CD14-positive monocyte (primary cell): ENCODE measurements at regions of chr22 and their contacts with region 1.

Region 1: GRCh38 chr22:21045585-21046294 is at the start of gene LRRC74B:
- DNase-seq: peak; percentile 79 to 86 (median 79)
- H3K4me3 ChIP-seq: peak within 1 kb of the TSS in 2 of 3 experiments; percentile 13 to 68
- H3K4me3 Mint-ChIP-seq: peak within 1 kb of the TSS; percentile 70 to 97
- H3K27ac ChIP-seq: no peak within 1 kb of the TSS
- H3K27ac Mint-ChIP-seq: peak within 1 kb of the TSS; percentile 32 to 94 (median 68)
- H3K4me1 ChIP-seq: peaks cover 14 to 21% of the 10 kb centered on the region in 2 donors
- H3K4me1 Mint-ChIP-seq: peaks cover 24% of the 10 kb centered on the region
- H3K27me3 ChIP-seq: peaks cover 0 to 5% of the 10 kb centered on the region in 2 donors
- H3K27me3 Mint-ChIP-seq: peaks cover 17 to 19% (median 17%) of the 10 kb centered on the region in 3 donors
- CTCF ChIP-seq: no peak
- polyA plus RNA-seq, gene LRRC74B: not detected

Region 2: DNA sequence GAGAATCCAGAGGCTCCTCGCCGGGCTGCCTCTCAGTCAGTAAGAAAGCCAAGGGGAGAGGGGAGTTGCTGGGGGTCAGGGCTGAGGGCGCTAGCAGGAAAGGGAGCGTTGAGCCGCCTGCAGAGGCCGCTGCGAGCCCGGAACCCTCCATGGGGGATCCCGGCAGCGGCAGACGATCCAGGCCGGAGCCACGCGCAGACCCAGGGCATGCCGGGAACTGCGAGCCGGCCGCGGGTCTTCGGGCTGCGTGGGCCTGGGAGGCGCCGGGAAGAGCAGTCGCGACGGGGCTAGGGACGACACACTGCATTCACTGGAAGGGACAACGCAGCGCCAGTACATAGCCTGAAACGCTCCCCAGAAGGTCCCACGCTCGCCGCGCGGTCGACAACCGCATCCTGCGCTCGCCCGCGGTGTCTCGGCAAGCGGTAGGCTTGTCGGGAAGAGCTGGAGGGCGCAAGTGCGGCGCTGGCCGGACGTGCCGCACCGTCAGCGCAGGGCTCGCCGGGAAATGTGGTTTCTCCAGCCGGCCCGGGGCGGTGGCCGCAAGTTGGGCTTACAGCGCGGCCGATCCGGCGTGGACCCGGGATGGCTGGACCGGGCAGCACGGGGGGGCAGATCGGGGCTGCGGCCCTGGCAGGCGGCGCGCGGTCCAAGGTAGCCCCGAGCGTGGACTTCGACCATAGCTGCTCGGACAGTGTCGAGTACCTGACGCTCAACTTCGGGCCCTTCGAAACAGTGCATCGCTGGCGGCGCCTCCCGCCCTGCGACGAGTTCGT is 63.8 kb before region 1 on chr22 and contains the start of gene LZTR1:
- intact Hi-C with region 1: loop called in 1 of 2 experiments (anchors 10 kb)
- DNase-seq: peak; percentile 69 to 78 (median 74)
- H3K4me3 ChIP-seq: peak within 1 kb of the TSS; percentile 61 to 80 (median 73)
- H3K4me3 Mint-ChIP-seq: peak within 1 kb of the TSS; percentile 88 to 98
- H3K27ac ChIP-seq: peak within 1 kb of the TSS; percentile 82 to 90
- H3K27ac Mint-ChIP-seq: peak within 1 kb of the TSS; percentile 84 to 92 (median 89)
- H3K4me1 ChIP-seq: peaks cover 31 to 46% of the 10 kb centered on the region in 2 donors
- H3K4me1 Mint-ChIP-seq: peaks cover 43% of the 10 kb centered on the region
- H3K27me3 ChIP-seq: peaks cover 0 to 3% of the 10 kb centered on the region in 2 donors
- H3K27me3 Mint-ChIP-seq: peaks cover 4 to 11% (median 10%) of the 10 kb centered on the region in 3 donors
- CTCF ChIP-seq: peak; percentile 56
- polyA plus RNA-seq, gene LZTR1: 7.1 to 63.3 (median 11.5) TPM

Region 3: DNA sequence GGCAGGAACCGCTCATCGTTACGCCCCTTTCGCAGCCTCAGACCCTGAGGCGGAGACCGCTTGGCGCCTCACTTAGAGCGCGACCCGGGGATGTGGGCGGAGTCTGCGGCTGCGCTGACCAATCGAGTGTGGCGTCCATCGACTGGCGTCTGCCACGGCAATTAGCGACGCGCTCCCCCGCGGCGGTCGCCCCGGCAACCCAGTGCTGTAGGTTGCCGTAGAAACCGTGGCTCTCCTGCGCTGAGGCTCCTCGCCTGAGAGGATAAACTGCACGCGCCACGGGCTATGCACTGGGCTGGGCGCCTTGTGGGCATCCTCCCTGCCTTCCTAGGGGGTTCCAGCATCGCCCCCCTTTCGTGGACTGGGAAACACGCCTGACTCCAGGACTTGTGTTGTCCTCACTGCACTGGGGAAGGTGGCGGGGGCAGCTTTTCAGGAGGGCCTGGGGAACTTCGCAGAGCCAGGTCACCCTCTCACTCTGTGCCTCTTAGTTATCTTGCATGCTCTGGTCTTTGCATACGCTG is 31.5 kb before region 1 on chr22:
- intact Hi-C with region 1: no loop called
- DNase-seq: peak; percentile 85 to 89 (median 88)
- H3K4me3 ChIP-seq: peak overlapping the region; percentile 7 to 73 (median 27)
- H3K4me3 Mint-ChIP-seq: peak overlapping the region; percentile 78 to 92
- H3K27ac ChIP-seq: no peak overlapping the region
- H3K27ac Mint-ChIP-seq: peak overlapping the region; percentile 21 to 92 (median 79)
- H3K4me1 ChIP-seq: peaks cover 15 to 19% of the 10 kb centered on the region in 2 donors
- H3K4me1 Mint-ChIP-seq: peaks cover 13% of the 10 kb centered on the region
- H3K27me3 ChIP-seq: peaks cover 0 to 14% of the 10 kb centered on the region in 2 donors
- H3K27me3 Mint-ChIP-seq: peaks cover 9 to 42% (median 13%) of the 10 kb centered on the region in 3 donors
- CTCF ChIP-seq: no peak